Activated T-helper 2 cell treated with anti-CD3 and anti-CD28 coated beads, Interferon-gamma antibody, Interleukin-2, Interleukin-4, amounts not matched to agents 10 μg/mL and 5 μg/mL and 100 μg/mL, durations not matched to agents 14 hours and 24 hours and 36 hours (primary cell): ENCODE measurements at regions of chr9 and their contacts with region 1.

Region 1: DNA sequence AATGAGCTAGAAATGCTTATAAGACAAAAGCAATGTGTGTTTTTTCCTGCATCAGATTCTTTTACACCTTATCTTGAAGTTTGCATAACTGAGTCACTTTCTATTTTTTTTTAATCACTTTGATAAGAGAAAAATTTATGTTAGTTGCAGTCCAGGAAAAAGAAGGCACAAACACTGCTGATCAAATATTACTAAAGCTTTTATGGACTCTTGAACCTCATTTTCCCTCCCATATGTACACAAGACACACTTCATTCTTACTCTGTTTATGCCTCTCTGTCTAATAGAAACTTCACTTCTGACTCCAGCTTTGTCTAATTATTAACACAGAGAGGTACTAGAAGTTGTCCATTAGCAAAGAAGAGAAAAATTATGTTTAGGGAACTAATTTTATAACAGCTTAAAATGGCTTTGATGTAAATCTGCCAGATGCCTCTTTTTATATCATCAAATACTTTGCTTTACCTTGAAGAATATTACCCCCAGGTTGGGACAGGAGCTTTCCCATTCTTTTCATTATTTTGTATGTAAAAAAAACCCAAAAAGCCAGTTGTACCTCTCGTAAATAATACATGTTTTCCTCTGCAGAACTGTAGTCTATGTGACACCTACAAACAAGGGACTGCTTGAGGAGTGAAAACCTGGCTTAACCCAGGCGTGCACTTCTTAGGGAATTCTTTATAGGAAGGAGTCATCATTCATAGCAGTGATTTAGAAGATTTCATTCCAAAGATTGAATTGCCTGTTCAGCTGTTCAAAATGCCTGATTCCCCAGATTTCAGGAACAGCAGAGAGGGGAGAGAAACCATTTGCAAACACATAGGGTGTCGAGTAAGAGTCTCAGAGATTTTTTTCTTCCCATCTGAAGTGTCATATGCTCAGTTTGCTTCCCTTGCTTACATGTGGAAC is 72.6 kb downstream of the DAPK1 start:
- DNase-seq: no peak
- H3K4me3 Mint-ChIP-seq: no peak overlapping the region
- H3K27ac Mint-ChIP-seq: no peak overlapping the region
- H3K4me1 Mint-ChIP-seq: no peaks in the 10 kb centered on the region
- H3K27me3 Mint-ChIP-seq: no peaks in the 10 kb centered on the region

Region 2: GRCh38 chr9:87223392-87224246 is 346.6 kb before region 1 on chr9:
- intact Hi-C with region 1: no loop called
- DNase-seq: no peak
- H3K4me3 Mint-ChIP-seq: no peak overlapping the region
- H3K27ac Mint-ChIP-seq: no peak overlapping the region
- H3K4me1 Mint-ChIP-seq: no peaks in the 10 kb centered on the region
- H3K27me3 Mint-ChIP-seq: peaks cover under 1% of the 10 kb centered on the region

Region 3: DNA sequence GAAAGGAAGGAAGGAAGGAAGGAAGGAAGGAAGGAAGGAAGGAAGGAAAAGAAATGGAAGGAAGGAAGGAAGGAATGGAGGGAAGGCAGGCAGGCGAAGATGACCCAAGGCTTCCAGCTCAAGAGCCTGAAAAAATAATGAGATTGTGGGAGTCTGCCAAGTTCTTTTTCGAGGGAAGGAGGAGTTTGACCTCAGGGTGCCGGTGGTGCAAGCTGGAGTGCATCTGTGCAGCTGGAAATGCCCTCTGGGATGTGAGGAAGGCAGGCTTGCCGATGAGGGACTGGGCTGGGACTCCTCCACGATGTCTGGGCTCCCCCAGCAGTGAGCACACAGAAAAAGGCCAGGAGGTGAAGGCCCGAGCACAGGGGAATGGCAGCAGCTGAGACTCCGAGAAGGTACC is 227.5 kb before region 1 on chr9:
- intact Hi-C with region 1: loop called (anchors 10 kb)
- DNase-seq: no peak
- H3K4me3 Mint-ChIP-seq: no peak overlapping the region
- H3K27ac Mint-ChIP-seq: no peak overlapping the region
- H3K4me1 Mint-ChIP-seq: peaks cover 2% of the 10 kb centered on the region
- H3K27me3 Mint-ChIP-seq: peaks cover 16% of the 10 kb centered on the region